ENCODE measurements at regions of chr9 and their contacts with region 1.

Region 1: GRCh38 chr9:33852216-33852826 is 35.4 kb downstream of the UBE2R2 start:
- DNase-seq: no peak
- H3K4me3 Mint-ChIP-seq: no peak overlapping the region
- H3K27ac Mint-ChIP-seq: no peak overlapping the region
- H3K4me1 Mint-ChIP-seq: peaks cover 12% of the 10 kb centered on the region
- H3K27me3 Mint-ChIP-seq: no peaks in the 10 kb centered on the region

Region 2: GRCh38 chr9:33785913-33786312 is 66.4 kb before region 1 on chr9:
- intact Hi-C with region 1: loop called (anchors 10 kb)
- DNase-seq: no peak
- H3K4me3 Mint-ChIP-seq: no peak overlapping the region
- H3K27ac Mint-ChIP-seq: no peak overlapping the region
- H3K4me1 Mint-ChIP-seq: peaks cover 1% of the 10 kb centered on the region
- H3K27me3 Mint-ChIP-seq: peaks cover 31% of the 10 kb centered on the region

Measured in activated T-helper 2 cell treated with anti-CD3 and anti-CD28 coated beads, Interferon-gamma antibody, Interleukin-2, Interleukin-4, amounts not matched to agents 10 μg/mL and 5 μg/mL and 100 μg/mL, durations not matched to agents 14 hours and 24 hours and 36 hours (primary cell).